Activated CD4-positive, alpha-beta T cell treated with anti-CD3 and anti-CD28 coated beads, Interleukin-2, amount 10 ng/mL, durations not matched to agents 24 days and 14 days (primary cell): ENCODE measurements at regions of chr5 and their contacts with region 1.

Region 1: GRCh38 chr5:148730943-148731861 is 76.9 kb upstream of the HTR4 start:
- DNase-seq: peak; percentile 89
- H3K4me3 Mint-ChIP-seq: peak overlapping the region; percentile 9
- H3K27ac Mint-ChIP-seq: peak overlapping the region; percentile 3
- H3K4me1 Mint-ChIP-seq: peaks cover 7% of the 10 kb centered on the region
- H3K27me3 Mint-ChIP-seq: peaks cover 17% of the 10 kb centered on the region

Region 2: GRCh38 chr5:147949711-147950573 is 781.3 kb before region 1 on chr5:
- intact Hi-C with region 1: loop called (anchors 5 kb)
- DNase-seq: no peak
- H3K4me3 Mint-ChIP-seq: no peak overlapping the region
- H3K27ac Mint-ChIP-seq: no peak overlapping the region
- H3K4me1 Mint-ChIP-seq: no peaks in the 10 kb centered on the region
- H3K27me3 Mint-ChIP-seq: no peaks in the 10 kb centered on the region

Region 3: DNA sequence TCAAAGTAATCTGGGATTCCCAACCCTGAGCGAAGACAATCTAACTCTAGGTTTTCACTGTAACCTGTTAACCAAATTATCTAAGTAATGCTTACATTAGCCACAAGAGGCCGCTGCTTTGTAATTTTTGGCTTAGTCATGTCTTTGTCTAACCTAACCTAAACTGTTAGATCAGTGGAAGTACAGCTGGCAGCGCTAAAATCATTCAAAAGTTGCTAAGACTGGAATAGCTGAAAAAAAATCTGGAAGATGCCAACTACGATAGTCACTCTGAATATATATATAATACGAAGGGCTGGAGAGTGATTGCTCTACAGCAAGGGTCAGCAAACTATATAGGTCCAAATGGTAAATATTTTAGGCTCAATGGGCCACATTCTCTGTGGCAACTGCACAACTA is 287.2 kb before region 1 on chr5:
- intact Hi-C with region 1: loop called (anchors 1 kb)
- DNase-seq: peak; percentile 85
- H3K4me3 Mint-ChIP-seq: no peak overlapping the region
- H3K27ac Mint-ChIP-seq: no peak overlapping the region
- H3K4me1 Mint-ChIP-seq: no peaks in the 10 kb centered on the region
- H3K27me3 Mint-ChIP-seq: no peaks in the 10 kb centered on the region

Region 4: DNA sequence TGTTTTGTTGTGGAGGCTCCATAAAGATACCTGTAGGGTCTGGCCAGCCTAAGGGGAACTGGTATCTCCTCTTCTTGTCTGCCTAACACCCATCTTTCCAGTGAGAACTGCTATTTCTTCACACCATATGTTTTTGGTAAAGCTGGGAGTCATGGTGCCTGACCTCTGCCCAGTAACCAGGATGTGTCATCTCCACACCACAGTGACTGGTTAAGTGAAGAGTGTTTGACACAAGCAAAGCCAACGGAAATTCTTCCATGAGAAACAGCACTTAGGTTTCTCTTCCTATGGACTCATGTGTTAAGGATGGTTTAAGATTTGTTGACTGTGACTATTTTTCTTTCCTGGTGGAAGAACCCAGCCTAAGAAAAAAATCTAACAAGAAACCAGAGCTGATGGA is 188.4 kb before region 1 on chr5:
- intact Hi-C with region 1: no loop called
- DNase-seq: no peak
- H3K4me3 Mint-ChIP-seq: no peak overlapping the region
- H3K27ac Mint-ChIP-seq: no peak overlapping the region
- H3K4me1 Mint-ChIP-seq: no peaks in the 10 kb centered on the region
- H3K27me3 Mint-ChIP-seq: peaks cover 4% of the 10 kb centered on the region

Region 5: DNA sequence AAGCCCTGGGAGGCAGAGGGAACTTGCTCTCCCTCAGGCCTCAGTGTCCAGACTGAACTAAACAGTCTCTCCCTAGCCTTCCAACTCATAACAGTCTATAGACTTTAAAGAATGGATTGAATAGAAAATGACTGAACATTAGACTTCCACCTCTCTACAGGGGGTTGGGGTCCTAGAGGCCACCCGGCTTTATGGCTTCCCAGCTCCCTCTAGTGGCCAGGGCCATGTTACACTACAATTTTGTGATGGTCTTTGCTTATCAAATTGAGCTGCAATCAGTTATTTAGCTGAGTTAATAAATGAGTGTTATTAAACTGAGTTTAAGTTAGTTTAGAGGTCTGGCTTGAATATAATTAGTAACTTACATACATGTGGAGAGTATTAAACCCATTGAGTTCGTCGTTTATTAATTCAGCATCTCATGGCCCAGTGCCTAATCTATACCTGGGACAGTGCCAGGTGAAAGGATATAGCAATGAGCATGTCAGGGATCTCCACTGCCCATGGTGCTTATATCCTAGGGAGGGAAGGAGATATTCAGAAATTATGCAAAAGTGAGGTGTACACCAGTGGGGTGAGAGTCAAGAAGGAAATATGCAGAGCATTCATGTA is 226.5 kb after region 1 on chr5:
- intact Hi-C with region 1: loop called (anchors 1 kb)
- DNase-seq: peak; percentile 76
- H3K4me3 Mint-ChIP-seq: no peak overlapping the region
- H3K27ac Mint-ChIP-seq: no peak overlapping the region
- H3K4me1 Mint-ChIP-seq: no peaks in the 10 kb centered on the region
- H3K27me3 Mint-ChIP-seq: peaks cover 11% of the 10 kb centered on the region

Region 6: GRCh38 chr5:149035372-149035790 is 304.2 kb after region 1 on chr5:
- intact Hi-C with region 1: loop called (anchors 1 kb)
- DNase-seq: peak; percentile 89
- H3K4me3 Mint-ChIP-seq: no peak overlapping the region
- H3K27ac Mint-ChIP-seq: no peak overlapping the region
- H3K4me1 Mint-ChIP-seq: peaks cover 28% of the 10 kb centered on the region
- H3K27me3 Mint-ChIP-seq: peaks cover 3% of the 10 kb centered on the region

Region 7: DNA sequence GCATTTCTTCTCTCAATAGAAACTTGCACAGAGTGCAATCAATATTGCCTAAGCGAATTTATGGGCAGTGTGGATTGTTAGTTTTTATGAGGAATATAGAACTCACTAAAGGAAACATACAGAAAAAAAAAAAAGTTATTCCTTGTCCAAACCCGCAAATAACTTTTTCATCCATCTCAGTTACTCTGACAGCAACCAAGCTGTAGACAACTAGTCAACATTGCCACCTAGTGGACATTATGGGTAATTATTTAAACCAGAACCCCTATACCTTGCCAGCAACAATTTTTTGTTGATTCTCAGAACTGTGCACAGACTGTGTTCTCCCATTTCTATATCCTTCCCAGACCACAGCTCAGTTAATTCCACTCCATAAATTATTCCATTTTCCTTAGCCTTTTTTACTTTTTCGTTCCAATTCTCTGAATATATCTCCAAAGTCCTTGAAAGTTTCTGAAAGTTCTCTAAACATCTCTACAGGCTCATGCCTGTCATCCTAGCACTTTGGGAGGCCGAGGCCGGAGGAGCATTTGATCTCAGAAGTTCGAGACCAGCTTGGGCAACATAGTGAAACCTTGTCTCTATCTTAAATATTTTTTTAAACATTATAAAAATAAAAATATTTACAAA is 537.8 kb after region 1 on chr5:
- intact Hi-C with region 1: loop called (anchors 2 kb)
- DNase-seq: peak; percentile 70
- H3K4me3 Mint-ChIP-seq: no peak overlapping the region
- H3K27ac Mint-ChIP-seq: no peak overlapping the region
- H3K4me1 Mint-ChIP-seq: peaks cover 6% of the 10 kb centered on the region
- H3K27me3 Mint-ChIP-seq: peaks cover 55% of the 10 kb centered on the region